ENCODE measurements at regions of chr18 and their contacts with region 1.

Region 1: GRCh38 chr18:76476665-76477561 is 18.1 kb downstream of the ZNF516 start:
- DNase-seq: no peak
- ATAC-seq: peak; percentile 81
- H3K4me3 ChIP-seq: peak overlapping the region; percentile 54
- H3K27ac ChIP-seq: peak overlapping the region; percentile 83
- H3K4me1 ChIP-seq: peaks cover 24% of the 10 kb centered on the region
- H3K27me3 ChIP-seq: no peaks in the 10 kb centered on the region
- CTCF ChIP-seq: no peak
- EP300 ChIP-seq: no peak
- POLR2A ChIP-seq: peak; percentile 38; the same call in 1 of the 2 replicates
- RAD21 ChIP-seq: no peak

Region 2: GRCh38 chr18:76456018-76456750 is 20.7 kb before region 1 on chr18:
- CTCF ChIA-PET with region 1: interaction called, 3 read pairs
- POLR2A ChIA-PET with region 1: interaction called, 3 read pairs
- RAD21 ChIA-PET with region 1: interaction called, 5 read pairs
- SMC1A ChIA-PET with region 1: interaction called, 11 read pairs
- in situ Hi-C with region 1: no loop called
- intact Hi-C with region 1: no loop called
- DNase-seq: no peak
- ATAC-seq: peak; percentile 49
- H3K4me3 ChIP-seq: no peak overlapping the region; the same call in 1 of the 2 replicates
- H3K27ac ChIP-seq: peak overlapping the region; percentile 48
- H3K4me1 ChIP-seq: peaks cover 17% of the 10 kb centered on the region
- H3K27me3 ChIP-seq: no peaks in the 10 kb centered on the region
- CTCF ChIP-seq: no peak
- EP300 ChIP-seq: no peak
- POLR2A ChIP-seq: no peak
- RAD21 ChIP-seq: no peak

Region 3: DNA sequence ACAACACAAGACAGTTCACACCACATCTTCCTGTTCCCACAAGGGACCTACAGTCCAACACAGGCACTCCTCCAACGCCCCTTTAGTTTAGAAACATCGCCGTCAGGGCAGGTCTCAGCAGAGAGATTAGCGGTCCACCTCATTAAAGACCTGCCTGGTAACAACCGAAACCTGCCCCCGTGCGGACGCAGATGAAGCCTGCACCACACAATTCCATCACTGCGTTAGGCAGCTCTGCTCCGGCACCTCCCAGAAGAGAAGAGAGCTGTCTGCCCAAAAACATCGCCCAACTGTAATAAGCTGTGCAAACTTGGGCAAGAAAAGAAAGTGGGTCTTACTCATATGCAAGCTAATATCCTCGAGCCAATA is 14.6 kb before region 1 on chr18:
- CTCF ChIA-PET with region 1: interaction called, 4 read pairs
- POLR2A ChIA-PET with region 1: interaction called, 3 read pairs
- RAD21 ChIA-PET with region 1: no interaction called
- SMC1A ChIA-PET with region 1: interaction called, 11 read pairs
- in situ Hi-C with region 1: no loop called
- intact Hi-C with region 1: no loop called
- DNase-seq: no peak
- ATAC-seq: no peak
- H3K4me3 ChIP-seq: no peak overlapping the region
- H3K27ac ChIP-seq: no peak overlapping the region
- H3K4me1 ChIP-seq: peaks cover 5% of the 10 kb centered on the region
- H3K27me3 ChIP-seq: no peaks in the 10 kb centered on the region
- CTCF ChIP-seq: no peak
- EP300 ChIP-seq: no peak
- POLR2A ChIP-seq: no peak
- RAD21 ChIP-seq: no peak